ENCODE measurements at regions of chr9 and their contacts with region 1.

Region 1: DNA sequence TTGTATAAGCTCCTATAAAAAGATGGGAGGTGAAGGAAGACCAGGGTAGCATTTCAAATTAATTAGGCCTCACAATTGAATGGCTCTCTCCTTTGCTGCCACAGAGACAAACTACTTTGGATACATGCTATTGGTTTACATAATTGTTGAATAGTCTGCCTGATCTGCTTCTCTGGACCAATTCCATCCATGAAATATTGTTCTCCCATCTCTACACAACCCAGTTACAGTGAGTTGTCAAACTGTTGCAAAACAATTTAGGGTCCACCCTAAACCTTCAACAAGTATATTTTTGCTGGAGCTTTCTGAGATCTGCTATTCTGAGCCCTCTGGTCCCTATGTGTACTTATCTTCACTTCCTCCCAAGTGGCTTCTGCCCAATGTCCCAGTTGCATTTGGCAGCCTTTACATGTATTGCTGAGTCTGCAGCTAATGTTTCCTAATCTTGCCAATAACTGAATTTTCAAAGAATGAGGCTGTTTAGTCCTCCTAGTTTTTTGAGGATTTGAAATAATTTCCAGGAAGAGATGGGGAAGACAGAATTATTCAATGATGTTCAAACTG is 38.9 kb downstream of the AGTPBP1 start:
- DNase-seq: peak in 1 of 10 donors; percentile 19
- H3K4me3 ChIP-seq: no peak overlapping the region
- H3K27ac ChIP-seq: peak overlapping the region in 34 of 59 donors; percentile 5 to 69 (median 35)
- H3K27me3 ChIP-seq: no peaks in the 10 kb centered on the region
- CTCF ChIP-seq: no peak

Region 2: GRCh38 chr9:85262333-85262732 is 440.5 kb before region 1 on chr9:
- intact Hi-C with region 1: no loop called
- DNase-seq: no peak
- H3K4me3 ChIP-seq: no peak overlapping the region
- H3K27ac ChIP-seq: no peak overlapping the region
- H3K27me3 ChIP-seq: no peaks in the 10 kb centered on the region
- CTCF ChIP-seq: no peak

Region 3: DNA sequence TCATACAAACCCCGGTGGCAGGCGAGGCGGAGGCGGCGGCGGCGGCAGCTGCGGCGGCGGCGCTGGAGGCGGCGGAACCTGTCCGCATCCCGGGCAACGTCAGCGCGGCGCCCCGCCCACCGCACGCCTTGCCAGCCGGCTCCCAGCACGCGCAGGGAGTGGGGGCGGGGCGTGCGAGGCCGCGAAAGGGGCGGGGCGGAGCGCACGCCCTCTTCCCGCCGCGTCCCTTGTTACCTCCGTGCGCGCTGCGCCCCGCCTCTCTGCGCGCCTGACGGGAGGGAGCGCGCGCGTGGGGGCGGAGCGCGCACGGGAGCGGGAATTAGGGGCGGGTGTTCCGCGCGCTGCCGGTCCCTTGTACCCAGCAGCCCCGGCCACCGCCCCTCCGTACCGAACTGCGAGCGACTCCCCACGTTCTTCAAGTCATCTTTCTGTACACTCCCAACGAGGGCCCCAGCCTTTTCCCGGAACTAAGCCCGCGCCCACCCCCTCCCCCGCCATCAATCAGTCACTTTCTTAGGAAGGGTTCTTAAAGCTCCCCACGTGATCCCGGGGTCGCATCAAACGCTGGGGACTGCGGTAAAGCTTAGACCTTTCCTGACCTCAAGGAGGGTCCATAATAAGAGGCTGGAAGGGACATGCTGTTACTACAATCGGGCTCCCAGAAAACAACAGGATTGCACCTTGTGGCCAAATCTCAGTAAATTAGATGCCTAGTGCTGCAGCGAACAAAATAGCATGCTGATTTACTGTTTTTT is 39.2 kb after region 1 on chr9 and contains the start of gene AGTPBP1:
- intact Hi-C with region 1: loop called (anchors 5 kb)
- DNase-seq: peak; percentile 81 to 95 (median 91)
- H3K4me3 ChIP-seq: peak within 1 kb of the TSS; percentile 54 to 99 (median 93)
- H3K27ac ChIP-seq: peak within 1 kb of the TSS; percentile 76 to 97 (median 90)
- H3K27me3 ChIP-seq: no peaks in the 10 kb centered on the region
- CTCF ChIP-seq: peak in 27 of 56 donors; percentile 4 to 49 (median 21)
- total RNA-seq, gene AGTPBP1: 69.0 to 186 (median 111) TPM

Region 4: DNA sequence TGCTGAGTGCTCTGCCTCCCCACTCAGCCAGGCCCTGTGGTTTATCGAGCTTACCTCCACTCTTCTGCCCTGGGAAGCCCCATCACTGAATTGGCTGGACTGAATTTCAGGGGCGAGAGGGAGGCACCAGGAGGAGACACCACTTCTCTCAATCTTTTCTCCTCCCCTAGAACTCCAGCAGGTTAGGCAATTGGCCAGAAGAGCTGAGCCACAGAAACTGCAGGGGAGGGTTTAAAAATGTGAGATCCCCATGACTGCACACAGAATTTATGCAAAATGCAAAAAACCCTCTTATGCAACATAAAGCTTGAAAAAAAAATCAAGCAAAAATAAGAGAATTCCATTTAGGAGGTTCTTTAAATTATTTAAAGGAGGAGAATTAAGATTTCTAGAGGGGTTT is 621.5 kb after region 1 on chr9:
- intact Hi-C with region 1: no loop called
- DNase-seq: peak in 4 of 10 donors; percentile 29 to 50 (median 38)
- H3K4me3 ChIP-seq: peak overlapping the region in 1 of 59 donors; percentile 20
- H3K27ac ChIP-seq: peak overlapping the region in 55 of 59 donors; percentile 4 to 83 (median 59)
- H3K27me3 ChIP-seq: no peaks in the 10 kb centered on the region
- CTCF ChIP-seq: no peak